ENCODE measurements at regions of chr11 and their contacts with region 1.

Region 1: GRCh38 chr11:119728651-119729580 is at the start of gene NECTIN1:
- DNase-seq: peak; percentile 96
- ATAC-seq: peak; percentile 71
- H3K4me3 Mint-ChIP-seq: peak within 1 kb of the TSS; percentile 95
- H3K27ac Mint-ChIP-seq: peak within 1 kb of the TSS; percentile 75
- H3K4me1 Mint-ChIP-seq: peaks cover 35% of the 10 kb centered on the region
- H3K27me3 Mint-ChIP-seq: peaks cover 4% of the 10 kb centered on the region; the same call in 1 of the 2 replicates
- CTCF ChIP-seq: peak; percentile 90
- total RNA-seq, gene NECTIN1: 68.4 to 86.2 TPM (median 69.5 TPM) in 3 replicates

Region 2: GRCh38 chr11:119624102-119624615 is 104.8 kb before region 1 on chr11:
- CTCF ChIA-PET with region 1: interaction called, 14 read pairs
- POLR2A ChIA-PET with region 1: no interaction called
- DNase-seq: no peak
- ATAC-seq: peak; percentile 34
- H3K4me3 Mint-ChIP-seq: no peak overlapping the region
- H3K27ac Mint-ChIP-seq: no peak overlapping the region
- H3K4me1 Mint-ChIP-seq: peaks cover 41% of the 10 kb centered on the region
- H3K27me3 Mint-ChIP-seq: peaks cover 4% of the 10 kb centered on the region
- CTCF ChIP-seq: peak; percentile 90

Region 3: GRCh38 chr11:119666463-119667131 is 62.3 kb before region 1 on chr11:
- CTCF ChIA-PET with region 1: interaction called, 20 read pairs
- POLR2A ChIA-PET with region 1: no interaction called
- DNase-seq: peak; percentile 88
- ATAC-seq: peak; percentile 92
- H3K4me3 Mint-ChIP-seq: no peak overlapping the region
- H3K27ac Mint-ChIP-seq: peak overlapping the region; percentile 89
- H3K4me1 Mint-ChIP-seq: peaks cover 25% of the 10 kb centered on the region
- H3K27me3 Mint-ChIP-seq: no peaks in the 10 kb centered on the region
- CTCF ChIP-seq: peak; percentile 85

Region 4: GRCh38 chr11:119694334-119694733 is 34.6 kb before region 1 on chr11:
- CTCF ChIA-PET with region 1: interaction called, 16 read pairs
- POLR2A ChIA-PET with region 1: interaction called, 3 read pairs
- DNase-seq: no peak
- ATAC-seq: no peak
- H3K4me3 Mint-ChIP-seq: no peak overlapping the region
- H3K27ac Mint-ChIP-seq: peak overlapping the region; percentile 19; the same call in 1 of the 2 replicates
- H3K4me1 Mint-ChIP-seq: peaks cover 76% of the 10 kb centered on the region
- H3K27me3 Mint-ChIP-seq: no peaks in the 10 kb centered on the region
- CTCF ChIP-seq: no peak

Region 5: GRCh38 chr11:119709638-119710346 is 19.1 kb before region 1 on chr11:
- CTCF ChIA-PET with region 1: interaction called, 41 read pairs
- POLR2A ChIA-PET with region 1: interaction called, 5 read pairs
- DNase-seq: peak; percentile 53
- ATAC-seq: peak; percentile 85
- H3K4me3 Mint-ChIP-seq: 0 out of 2 replicates have a peak overlapping the region, but pooled peaks have one; percentile 4
- H3K27ac Mint-ChIP-seq: no peak overlapping the region; the same call in 1 of the 2 replicates
- H3K4me1 Mint-ChIP-seq: peaks cover 69% of the 10 kb centered on the region
- H3K27me3 Mint-ChIP-seq: no peaks in the 10 kb centered on the region; the same call in 1 of the 2 replicates
- CTCF ChIP-seq: no peak

Region 6: GRCh38 chr11:119764108-119764868 is 35.4 kb after region 1 on chr11:
- CTCF ChIA-PET with region 1: interaction called, 11 read pairs
- POLR2A ChIA-PET with region 1: no interaction called
- DNase-seq: no peak
- ATAC-seq: peak; percentile 48
- H3K4me3 Mint-ChIP-seq: no peak overlapping the region
- H3K27ac Mint-ChIP-seq: no peak overlapping the region
- H3K4me1 Mint-ChIP-seq: peaks cover 14% of the 10 kb centered on the region
- H3K27me3 Mint-ChIP-seq: no peaks in the 10 kb centered on the region; the same call in none of the 2 replicates
- CTCF ChIP-seq: no peak

Region 7: GRCh38 chr11:119843877-119844276 is 115.0 kb after region 1 on chr11:
- CTCF ChIA-PET with region 1: no interaction called
- POLR2A ChIA-PET with region 1: no interaction called
- DNase-seq: no peak
- ATAC-seq: no peak
- H3K4me3 Mint-ChIP-seq: no peak overlapping the region
- H3K27ac Mint-ChIP-seq: no peak overlapping the region
- H3K4me1 Mint-ChIP-seq: peaks cover 9% of the 10 kb centered on the region
- H3K27me3 Mint-ChIP-seq: no peaks in the 10 kb centered on the region; the same call in 1 of the 2 replicates
- CTCF ChIP-seq: no peak

Measured in WTC11 (cell line).